H1 (cell line): ENCODE measurements at regions of chr6 and their contacts with region 1.

Region 1: GRCh38 chr6:167227984-167228383 is 63.1 kb upstream of the UNC93A start:
- DNase-seq: peak; percentile 60 to 70
- H3K4me3 ChIP-seq: peak overlapping the region; percentile 67 to 90 (median 75)
- H3K27ac ChIP-seq: no peak overlapping the region
- H3K4me1 ChIP-seq: peaks cover 9 to 32% (median 22%) of the 10 kb centered on the region in 4 experiments
- H3K27me3 ChIP-seq: no peaks in the 10 kb centered on the region
- CTCF ChIP-seq: no peak
- EP300 ChIP-seq: no peak
- POLR2A ChIP-seq: peak in 1 of 2 experiments; percentile 38; a peak in 1 of 3 replicates
- RAD21 ChIP-seq: no peak

Region 2: DNA sequence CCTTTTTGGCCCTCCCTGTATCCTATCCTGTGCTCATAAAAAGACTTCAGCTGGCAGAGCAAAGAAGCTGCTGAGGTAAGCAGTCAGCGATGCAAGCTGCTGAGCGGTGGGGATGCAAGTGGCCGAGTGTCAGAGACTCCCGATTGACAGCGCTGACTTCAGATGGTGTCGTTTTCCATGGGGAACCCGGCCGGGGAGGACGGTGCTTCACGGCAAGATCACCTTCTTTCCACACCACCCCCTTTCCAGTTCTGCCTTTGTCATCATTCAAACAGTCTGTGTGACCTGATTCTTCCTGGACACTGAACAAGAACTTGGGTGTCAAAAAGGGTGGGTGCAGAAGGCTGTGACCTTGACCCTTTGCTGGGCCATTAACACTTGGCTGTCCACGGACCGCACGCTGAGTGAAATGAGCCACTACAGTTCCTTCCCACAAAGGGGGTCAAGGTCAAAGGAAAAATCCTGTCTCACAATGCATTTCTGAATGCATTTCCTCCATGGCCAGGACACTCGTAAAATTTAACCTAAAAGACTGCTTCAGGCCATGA is 10.2 kb after region 1 on chr6:
- CTCF ChIA-PET with region 1: interaction called, 6 read pairs
- POLR2A ChIA-PET with region 1: interaction called, 19 read pairs
- DNase-seq: no peak
- H3K4me3 ChIP-seq: no peak overlapping the region
- H3K27ac ChIP-seq: no peak overlapping the region
- H3K4me1 ChIP-seq: peaks cover 0 to 37% (median 20%) of the 10 kb centered on the region in 4 experiments
- H3K27me3 ChIP-seq: no peaks in the 10 kb centered on the region
- CTCF ChIP-seq: no peak
- EP300 ChIP-seq: no peak
- POLR2A ChIP-seq: peak in 1 of 2 experiments; percentile 33; a peak in 1 of 3 replicates
- RAD21 ChIP-seq: no peak

Region 3: DNA sequence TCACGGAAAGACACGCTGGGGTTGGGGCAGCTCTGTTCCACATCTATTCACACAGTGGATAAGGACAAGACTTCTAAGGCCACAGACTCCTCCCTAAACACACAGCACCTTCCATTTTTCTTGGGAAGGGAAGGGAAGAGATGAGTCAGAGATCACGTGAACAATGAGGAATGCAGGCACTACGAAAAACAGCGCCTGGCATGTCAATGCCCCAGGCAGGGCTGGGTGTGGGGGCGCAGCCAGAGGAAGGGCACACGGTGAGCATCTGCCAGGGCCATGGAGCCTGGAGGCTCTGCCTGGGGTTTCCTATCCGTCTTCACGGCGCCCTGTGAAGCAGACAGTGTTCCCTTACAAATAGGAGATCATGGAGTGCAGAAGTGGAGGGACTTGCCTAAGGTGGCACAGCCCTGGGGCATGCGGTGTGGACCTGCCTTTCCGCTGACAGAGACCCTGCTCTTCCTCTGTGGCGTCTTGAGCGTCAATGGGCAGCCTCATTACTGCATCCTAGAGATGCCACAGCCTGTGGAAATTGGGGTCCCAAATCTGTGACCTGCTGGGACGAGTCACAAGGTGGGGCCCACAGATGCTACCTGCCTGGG is 78.5 kb after region 1 on chr6:
- CTCF ChIA-PET with region 1: no interaction called
- POLR2A ChIA-PET with region 1: no interaction called
- DNase-seq: no peak
- H3K4me3 ChIP-seq: no peak overlapping the region
- H3K27ac ChIP-seq: no peak overlapping the region
- H3K4me1 ChIP-seq: peaks cover 0 to 21% (median 6%) of the 10 kb centered on the region in 4 experiments; a peak in 6 of 7 replicates
- H3K27me3 ChIP-seq: peaks cover 0 to 2% (median 0%) of the 10 kb centered on the region in 4 experiments; a peak in 2 of 7 replicates
- CTCF ChIP-seq: no peak
- EP300 ChIP-seq: no peak
- POLR2A ChIP-seq: no peak
- RAD21 ChIP-seq: no peak

Region 4: DNA sequence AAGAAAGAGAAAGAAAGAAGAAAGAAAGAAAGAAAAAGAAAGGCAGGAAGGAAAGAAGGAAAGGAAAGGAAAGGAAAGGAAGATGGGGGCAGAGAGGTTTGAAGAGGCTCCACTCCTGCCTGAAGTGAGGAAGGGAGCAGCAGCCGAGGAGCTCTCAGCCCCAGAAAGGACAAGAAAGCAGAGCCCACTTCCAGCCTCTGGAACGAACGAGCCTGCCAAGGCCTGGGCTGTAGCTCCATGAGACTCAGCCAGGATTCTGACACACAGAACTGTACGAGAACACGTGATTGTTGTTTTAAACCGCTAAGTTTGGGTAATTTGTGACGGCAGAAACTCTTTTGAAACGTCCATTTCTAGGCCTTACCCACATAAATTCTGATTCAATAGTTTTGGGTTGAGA is 166.4 kb after region 1 on chr6:
- CTCF ChIA-PET with region 1: no interaction called
- POLR2A ChIA-PET with region 1: no interaction called
- DNase-seq: no peak
- H3K4me3 ChIP-seq: no peak overlapping the region
- H3K27ac ChIP-seq: no peak overlapping the region
- H3K4me1 ChIP-seq: no peaks in the 10 kb centered on the region; a peak in 1 of 7 replicates
- H3K27me3 ChIP-seq: no peaks in the 10 kb centered on the region
- CTCF ChIP-seq: no peak
- EP300 ChIP-seq: no peak
- POLR2A ChIP-seq: no peak
- RAD21 ChIP-seq: no peak